PC-3 (cell line): ENCODE measurements at regions of chr5 and their contacts with region 1.

Region 1: DNA sequence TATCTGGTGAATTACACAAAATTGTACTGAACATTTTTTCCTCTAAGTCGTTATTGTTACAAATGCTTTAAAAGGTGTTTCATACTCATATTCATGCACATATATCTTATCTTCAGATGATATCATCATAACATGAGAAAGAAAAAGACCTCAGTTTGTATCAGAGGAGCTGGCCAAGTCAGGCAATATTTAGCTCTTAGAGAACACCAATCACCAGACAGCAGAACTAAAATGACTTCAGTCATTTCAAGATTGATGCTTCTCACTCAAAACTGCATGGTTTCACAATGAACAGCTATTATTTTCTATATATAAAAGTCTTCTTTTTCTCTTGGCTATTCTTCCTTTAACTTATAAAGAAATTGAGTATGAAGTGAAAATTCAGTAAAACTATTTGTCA is 44.6 kb downstream of the TSSK1B start:
- DNase-seq: no peak
- ATAC-seq: no peak
- H3K4me3 ChIP-seq: no peak overlapping the region
- H3K27ac ChIP-seq: no peak overlapping the region
- H3K4me1 ChIP-seq: no peaks in the 10 kb centered on the region
- H3K27me3 ChIP-seq: peaks cover 9% of the 10 kb centered on the region; the same call in 1 of the 2 replicates
- CTCF ChIP-seq: no peak

Region 2: DNA sequence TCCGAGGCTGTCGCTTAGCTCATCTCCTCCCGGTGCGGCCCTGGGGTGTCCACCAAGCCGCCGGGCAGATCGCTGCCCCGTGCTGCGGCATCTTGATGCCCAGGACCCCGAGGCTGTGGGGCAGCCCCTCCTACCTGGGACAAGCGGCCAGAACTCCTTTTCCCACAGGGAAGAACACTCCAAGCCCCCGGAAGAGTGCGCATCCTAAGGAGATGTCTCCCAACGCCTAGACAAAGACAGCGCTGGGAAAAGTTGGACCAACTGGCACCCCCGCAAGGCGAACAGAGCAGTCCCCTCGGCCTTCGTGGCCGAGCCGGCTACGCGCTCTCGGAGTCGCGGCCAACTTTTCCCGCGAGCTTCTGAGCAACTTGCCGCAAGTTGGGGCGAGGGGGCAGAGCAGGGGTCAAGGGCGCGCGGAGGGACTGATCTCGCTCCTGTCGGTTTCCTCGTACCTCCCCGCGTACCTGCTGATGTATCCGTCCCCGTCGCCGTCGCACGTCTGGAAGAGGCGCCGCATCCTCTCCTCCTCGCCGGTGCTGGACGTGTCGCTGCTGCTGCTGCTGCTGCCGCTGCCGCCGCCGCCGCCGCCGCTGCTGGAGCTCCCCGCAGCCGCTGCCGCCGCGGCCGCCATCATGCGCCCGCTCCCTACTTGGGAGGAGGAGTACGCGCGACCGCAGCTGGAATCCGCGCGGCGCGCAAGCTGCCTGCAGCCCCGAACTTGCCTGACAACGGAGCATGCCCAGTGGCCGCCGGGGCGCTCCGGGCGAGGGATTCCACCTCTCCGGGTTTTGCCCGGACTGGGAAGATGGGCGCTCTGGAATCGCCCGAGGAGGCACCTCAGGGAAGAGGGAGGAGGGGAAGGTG is 97.8 kb after region 1 on chr5 and contains the start of gene MCC:
- CTCF ChIA-PET with region 1: no interaction called
- POLR2A ChIA-PET with region 1: no interaction called
- intact Hi-C with region 1: loop called (anchors 5 kb)
- DNase-seq: peak; percentile 76
- ATAC-seq: peak; percentile 62
- H3K4me3 ChIP-seq: peak within 1 kb of the TSS; percentile 87
- H3K27ac ChIP-seq: no peak within 1 kb of the TSS
- H3K4me1 ChIP-seq: peaks cover 13% of the 10 kb centered on the region
- H3K27me3 ChIP-seq: peaks cover 16% of the 10 kb centered on the region; the same call in 1 of the 2 replicates
- CTCF ChIP-seq: no peak
- total RNA-seq, gene MCC: 7.1 and 10.3 TPM in 2 replicates